ENCODE measurements at regions of chr4 and their contacts with region 1.

Region 1: GRCh38 chr4:17636696-17637622 is 22.5 kb downstream of the MED28 start:
- DNase-seq: peak; percentile 68 to 89 (median 82)
- H3K4me3 ChIP-seq: no peak overlapping the region
- H3K27ac ChIP-seq: no peak overlapping the region
- H3K4me1 ChIP-seq: no peaks in the 10 kb centered on the region
- H3K27me3 ChIP-seq: no peaks in the 10 kb centered on the region
- CTCF ChIP-seq: peak; percentile 69 to 90 (median 82)
- POLR2A ChIP-seq: no peak

Region 2: DNA sequence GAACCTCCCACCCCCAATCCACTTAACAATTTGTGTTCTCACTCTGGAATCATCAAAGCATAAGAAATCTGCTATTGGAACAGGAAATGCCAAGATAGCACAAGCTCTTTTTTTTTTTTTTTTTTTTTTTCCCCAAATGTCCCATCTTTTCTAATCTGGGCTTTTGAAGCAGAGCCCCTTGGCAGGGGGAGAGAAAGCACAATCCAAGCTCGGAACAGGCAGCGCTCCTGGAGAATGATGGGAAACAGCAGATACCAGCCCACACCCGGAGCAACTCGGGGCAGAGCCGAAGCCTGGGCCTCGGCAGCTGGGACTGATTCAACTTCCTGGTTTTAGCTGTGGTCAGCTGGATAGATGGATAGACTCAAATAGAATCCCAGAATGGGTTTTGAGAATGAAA is 360.2 kb before region 1 on chr4:
- intact Hi-C with region 1: no loop called
- DNase-seq: peak in 1 of 7 donors; percentile 18
- H3K4me3 ChIP-seq: no peak overlapping the region
- H3K27ac ChIP-seq: no peak overlapping the region
- H3K4me1 ChIP-seq: peaks cover 11 to 17% of the 10 kb centered on the region in 2 donors
- H3K27me3 ChIP-seq: no peaks in the 10 kb centered on the region
- CTCF ChIP-seq: no peak
- POLR2A ChIP-seq: no peak

Region 3: GRCh38 chr4:17286752-17287460 is 350.1 kb before region 1 on chr4:
- intact Hi-C with region 1: no loop called
- DNase-seq: no peak
- H3K4me3 ChIP-seq: no peak overlapping the region
- H3K27ac ChIP-seq: no peak overlapping the region
- H3K4me1 ChIP-seq: no peaks in the 10 kb centered on the region
- H3K27me3 ChIP-seq: no peaks in the 10 kb centered on the region
- CTCF ChIP-seq: no peak
- POLR2A ChIP-seq: no peak

Region 4: DNA sequence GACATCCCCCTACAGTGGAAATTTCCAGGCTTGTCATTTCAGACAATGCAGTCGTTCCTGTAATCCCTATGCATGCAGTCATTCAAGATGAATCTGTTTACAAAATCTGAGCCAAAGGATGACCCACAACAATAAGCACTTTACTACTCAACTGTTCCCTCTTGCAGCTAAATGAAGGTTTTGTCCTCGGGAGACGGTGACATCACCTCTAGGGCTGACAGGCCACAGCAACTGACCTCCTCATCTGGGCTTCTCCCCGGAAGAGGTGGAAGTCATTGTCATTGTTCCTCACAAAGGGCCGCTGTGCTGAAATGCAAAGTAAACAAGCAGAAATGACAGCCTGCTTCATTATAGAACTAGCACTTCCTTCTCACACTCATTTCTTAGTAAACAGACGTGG is 92.8 kb before region 1 on chr4:
- intact Hi-C with region 1: loop called in 1 of 2 experiments (anchors 5 kb)
- DNase-seq: peak in 5 of 7 donors; percentile 27 to 40 (median 30)
- H3K4me3 ChIP-seq: no peak overlapping the region
- H3K27ac ChIP-seq: no peak overlapping the region
- H3K4me1 ChIP-seq: peaks cover 0 to 8% of the 10 kb centered on the region in 2 donors
- H3K27me3 ChIP-seq: no peaks in the 10 kb centered on the region
- CTCF ChIP-seq: no peak
- POLR2A ChIP-seq: no peak